Spleen (tissue), 13 donors: ENCODE measurements at regions of chr1 and their contacts with region 1.

Region 1: DNA sequence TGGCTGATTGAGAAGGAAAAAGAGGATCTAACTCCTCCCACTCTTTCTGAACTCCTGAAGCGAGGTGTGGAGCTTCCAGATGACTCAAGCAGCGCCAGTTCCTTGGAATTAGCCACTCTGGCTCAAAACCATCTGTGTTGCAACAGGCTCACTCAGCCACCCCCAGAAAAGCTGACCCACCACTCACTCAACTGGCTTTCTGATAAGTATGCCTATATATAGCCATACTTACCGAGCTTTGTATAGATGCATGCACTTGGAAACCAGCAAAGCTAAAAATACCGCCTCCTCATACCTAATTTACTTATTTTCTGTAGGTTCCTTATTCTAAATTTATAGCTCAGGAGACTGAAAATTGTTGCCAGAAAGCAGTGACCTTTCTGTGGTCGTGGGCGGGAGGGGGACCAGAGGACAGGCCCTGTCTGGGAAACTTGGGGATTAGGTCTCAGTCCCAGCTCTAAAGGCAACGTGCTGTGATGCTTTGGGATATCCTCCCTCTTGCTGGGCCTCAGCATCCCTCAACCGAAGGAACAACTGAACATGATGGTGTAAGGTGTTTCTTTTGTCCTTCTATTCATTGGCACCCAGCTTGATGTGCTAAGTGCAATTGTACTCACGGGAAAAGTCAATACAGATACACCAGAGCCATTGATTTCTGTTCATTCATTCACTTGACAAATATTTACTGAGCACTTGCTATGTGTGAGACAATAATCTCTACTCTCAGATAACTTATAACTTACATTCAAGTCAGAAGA is 65.7 kb downstream of the NENF start:
- DNase-seq: no peak
- H3K4me3 ChIP-seq: no peak overlapping the region
- H3K27ac ChIP-seq: no peak overlapping the region
- H3K4me1 ChIP-seq: no peaks in the 10 kb centered on the region
- H3K27me3 ChIP-seq: no peaks in the 10 kb centered on the region
- CTCF ChIP-seq: no peak
- POLR2A ChIP-seq: no peak

Region 2: GRCh38 chr1:212124690-212125582 is 373.5 kb before region 1 on chr1:
- intact Hi-C with region 1: no loop called
- DNase-seq: no peak
- H3K4me3 ChIP-seq: no peak overlapping the region
- H3K27ac ChIP-seq: peak overlapping the region in 4 of 8 donors; percentile 15 to 60 (median 26)
- H3K4me1 ChIP-seq: peaks cover 0 to 20% (median 9%) of the 10 kb centered on the region in 6 donors
- H3K27me3 ChIP-seq: no peaks in the 10 kb centered on the region
- CTCF ChIP-seq: no peak
- POLR2A ChIP-seq: no peak

Region 3: DNA sequence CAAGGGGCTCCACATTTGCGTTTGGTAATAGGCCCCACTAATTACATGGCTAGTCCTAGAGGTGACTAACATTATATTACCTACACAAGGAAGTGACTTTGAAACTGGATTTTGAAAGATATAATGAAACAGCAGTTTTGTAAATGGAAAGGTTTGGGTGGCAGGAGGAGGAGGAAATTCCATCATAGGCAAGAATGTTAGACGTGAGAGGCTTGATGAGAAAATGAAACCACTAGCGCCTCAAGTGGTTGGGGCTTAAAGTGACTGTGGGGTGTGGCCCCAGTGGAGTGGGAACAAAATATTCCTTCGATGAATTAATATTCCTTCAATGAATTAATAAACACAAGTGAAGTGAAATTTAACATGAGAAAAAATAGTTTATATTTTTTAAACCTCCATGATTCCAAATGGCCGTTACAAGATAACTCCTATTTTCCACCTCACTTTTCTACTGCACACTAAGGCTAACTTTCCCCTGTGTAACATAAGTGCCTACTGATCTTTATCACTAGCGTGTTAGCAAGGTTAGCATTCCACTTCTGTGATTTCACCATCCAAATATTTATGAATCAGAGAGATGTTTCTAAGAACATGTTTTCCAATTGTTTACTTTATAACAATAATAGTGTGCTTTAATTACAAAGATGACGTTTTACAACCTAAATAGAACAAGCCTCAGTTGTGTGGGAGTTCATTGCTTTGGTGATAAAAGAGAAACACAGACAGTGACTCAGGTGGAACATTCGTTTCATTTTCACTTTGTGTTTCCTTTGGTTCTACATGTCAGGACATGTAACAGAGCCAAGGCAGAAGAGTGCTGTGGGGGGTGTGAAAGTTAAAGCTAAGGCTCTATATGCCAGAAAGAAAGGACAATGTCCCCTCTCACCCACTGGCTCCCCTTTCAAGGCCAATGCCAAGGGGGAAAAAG is 97.6 kb after region 1 on chr1:
- intact Hi-C with region 1: no loop called
- DNase-seq: no peak
- H3K4me3 ChIP-seq: peak overlapping the region in 3 of 8 donors; percentile 13 to 41 (median 18)
- H3K27ac ChIP-seq: peak overlapping the region; percentile 9 to 75 (median 50)
- H3K4me1 ChIP-seq: peaks cover 0 to 15% (median 12%) of the 10 kb centered on the region in 6 donors
- H3K27me3 ChIP-seq: peaks cover 0 to 14% (median 0%) of the 10 kb centered on the region in 7 donors
- CTCF ChIP-seq: peak in 8 of 11 experiments; percentile 15 to 56 (median 42)
- POLR2A ChIP-seq: no peak

Region 4: GRCh38 chr1:212655668-212656423 is 157.4 kb after region 1 on chr1:
- intact Hi-C with region 1: loop called (anchors 10 kb)
- DNase-seq: no peak
- H3K4me3 ChIP-seq: no peak overlapping the region
- H3K27ac ChIP-seq: no peak overlapping the region
- H3K4me1 ChIP-seq: no peaks in the 10 kb centered on the region
- H3K27me3 ChIP-seq: peaks cover 0 to 12% (median 0%) of the 10 kb centered on the region in 7 donors
- CTCF ChIP-seq: no peak
- POLR2A ChIP-seq: no peak